ENCODE measurements at regions of chrX and their contacts with region 1.

Region 1: DNA sequence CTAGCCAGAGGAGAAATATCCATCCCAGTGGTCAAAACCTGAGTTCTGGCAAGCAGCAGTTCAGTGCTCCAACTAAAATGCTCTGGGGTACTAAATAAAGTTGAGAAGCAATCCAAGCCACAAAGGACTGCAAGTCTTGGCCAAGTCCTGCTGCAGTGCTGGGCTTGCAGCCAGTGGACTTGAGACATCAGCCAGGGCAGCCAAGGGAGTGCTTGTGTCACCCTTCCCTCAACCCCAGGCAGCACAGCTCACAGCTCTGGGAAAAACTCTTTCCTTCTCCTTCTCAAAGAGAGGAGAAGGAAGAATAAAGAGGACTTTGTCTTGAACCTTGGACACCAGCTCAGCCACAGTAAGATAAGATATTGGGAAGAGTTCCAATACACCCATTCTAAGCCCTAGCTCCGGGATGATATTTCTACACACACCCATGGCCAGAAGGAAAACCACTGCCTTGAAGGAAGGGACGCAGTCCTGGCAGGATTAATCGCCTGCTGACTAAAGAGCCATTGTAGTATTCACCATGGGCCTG is 99.8 kb downstream of the PTCHD1 start:
- DNase-seq: peak; percentile 87 to 94
- H3K4me3 ChIP-seq: no peak overlapping the region
- H3K27ac ChIP-seq: peak overlapping the region; percentile 76 to 84
- H3K4me1 ChIP-seq: peaks cover 0 to 27% (median 16%) of the 10 kb centered on the region in 4 donors
- H3K27me3 ChIP-seq: no peaks in the 10 kb centered on the region
- CTCF ChIP-seq: no peak

Region 2: GRCh38 chrX:22041907-22042530 is 1392.4 kb before region 1 on chrX:
- intact Hi-C with region 1: no loop called
- DNase-seq: no peak
- H3K4me3 ChIP-seq: no peak overlapping the region
- H3K27ac ChIP-seq: no peak overlapping the region
- H3K4me1 ChIP-seq: no peaks in the 10 kb centered on the region
- H3K27me3 ChIP-seq: no peaks in the 10 kb centered on the region
- CTCF ChIP-seq: no peak

Region 3: GRCh38 chrX:23341452-23341851 is 93.0 kb before region 1 on chrX:
- intact Hi-C with region 1: no loop called
- DNase-seq: no peak
- H3K4me3 ChIP-seq: no peak overlapping the region
- H3K27ac ChIP-seq: no peak overlapping the region
- H3K4me1 ChIP-seq: peaks cover 0 to 6% (median 0%) of the 10 kb centered on the region in 4 donors
- H3K27me3 ChIP-seq: no peaks in the 10 kb centered on the region
- CTCF ChIP-seq: no peak

Region 4: DNA sequence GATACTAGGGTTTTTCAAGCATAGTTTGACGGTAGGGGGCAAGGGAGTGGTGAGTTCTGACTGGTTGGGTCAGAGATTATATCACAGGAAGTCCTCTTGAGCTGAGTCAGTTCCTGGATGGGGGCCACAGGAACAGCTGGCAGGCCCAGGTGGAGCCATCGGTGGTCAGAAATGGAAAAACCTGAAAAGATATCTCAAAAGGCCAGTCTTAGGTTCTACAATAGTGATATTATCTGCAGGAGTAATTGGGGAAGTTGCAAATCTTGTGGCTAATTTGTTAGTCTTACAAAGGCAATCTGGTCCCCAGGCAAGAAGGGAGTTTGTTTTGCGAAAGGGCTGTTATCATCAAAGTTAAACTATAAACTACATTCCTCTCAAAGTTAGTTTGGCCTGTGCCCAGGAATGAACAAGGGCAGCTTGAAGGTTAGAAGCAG is 59.5 kb after region 1 on chrX:
- intact Hi-C with region 1: loop called (anchors 10 kb)
- DNase-seq: no peak
- H3K4me3 ChIP-seq: no peak overlapping the region
- H3K27ac ChIP-seq: no peak overlapping the region
- H3K4me1 ChIP-seq: peaks cover 0 to 6% (median 0%) of the 10 kb centered on the region in 4 donors
- H3K27me3 ChIP-seq: no peaks in the 10 kb centered on the region
- CTCF ChIP-seq: no peak